Natural killer cell (primary cell): ENCODE measurements at regions of chr17 and their contacts with region 1.

Region 1: GRCh38 chr17:58006924-58007780 is at the start of gene SRSF1:
- DNase-seq: peak; percentile 97 to 100
- ATAC-seq: peak; percentile 84 to 94 (median 85)
- H3K4me3 ChIP-seq: peak within 1 kb of the TSS; percentile 82
- H3K4me3 Mint-ChIP-seq: peak within 1 kb of the TSS; percentile 99
- H3K27ac ChIP-seq: peak within 1 kb of the TSS; percentile 83
- H3K27ac Mint-ChIP-seq: peak within 1 kb of the TSS; percentile 99
- H3K4me1 ChIP-seq: peaks cover 16% of the 10 kb centered on the region
- H3K4me1 Mint-ChIP-seq: peaks cover 50 to 51% of the 10 kb centered on the region in 2 donors
- H3K27me3 ChIP-seq: no peaks in the 10 kb centered on the region
- H3K27me3 Mint-ChIP-seq: no peaks in the 10 kb centered on the region
- CTCF ChIP-seq: no peak
- total RNA-seq, gene SRSF1: 125 to 157 (median 137) TPM

Region 2: DNA sequence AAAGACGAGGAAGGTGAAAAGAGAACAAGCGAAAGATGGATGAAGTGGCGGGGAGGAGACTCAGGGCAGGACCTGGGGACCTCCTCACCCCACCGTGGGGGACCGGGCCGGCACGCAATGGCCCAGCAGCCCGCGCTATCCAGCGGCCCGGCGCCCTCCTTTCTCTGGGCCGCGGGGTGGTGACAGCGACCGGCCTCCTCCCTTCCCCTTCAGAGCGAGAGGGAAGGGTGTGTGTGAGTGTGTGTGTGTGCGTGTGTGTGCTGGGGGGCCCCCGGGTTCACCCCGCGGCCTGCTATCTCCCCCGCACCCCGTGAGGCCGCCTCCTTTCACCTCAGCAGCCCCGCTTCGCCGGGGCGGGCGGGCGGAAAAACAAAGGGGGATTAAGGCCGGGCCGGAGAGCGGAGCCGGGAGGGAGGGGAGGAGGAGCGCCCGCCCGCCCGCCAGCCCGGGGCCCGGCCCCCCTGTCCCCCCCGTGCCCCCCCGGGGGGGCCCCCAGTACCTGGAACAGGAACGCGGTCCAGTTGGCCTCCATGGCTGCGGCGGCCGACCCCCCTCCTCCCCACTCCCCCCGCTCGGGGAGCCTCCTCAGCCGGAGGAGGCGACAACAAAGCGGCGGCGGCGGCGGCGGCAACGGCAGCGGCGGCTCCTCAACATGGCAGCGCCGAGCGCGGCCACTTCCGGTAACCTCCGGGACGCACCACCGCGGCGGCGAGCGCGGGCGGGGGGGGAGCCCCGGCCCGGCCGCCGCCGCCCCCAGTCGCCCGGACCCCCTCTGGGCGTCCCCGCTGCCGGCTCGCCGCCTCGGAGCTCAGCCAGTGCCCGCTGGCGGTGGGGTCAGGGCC is 19.4 kb before region 1 on chr17 and contains the start of gene VEZF1:
- intact Hi-C with region 1: loop called (anchors 2 kb)
- DNase-seq: peak; percentile 78 to 84
- ATAC-seq: peak; percentile 61 to 79 (median 79)
- H3K4me3 ChIP-seq: peak within 1 kb of the TSS; percentile 91
- H3K4me3 Mint-ChIP-seq: peak within 1 kb of the TSS; percentile 93
- H3K27ac ChIP-seq: peak within 1 kb of the TSS; percentile 81
- H3K27ac Mint-ChIP-seq: peak within 1 kb of the TSS; percentile 87 to 95
- H3K4me1 ChIP-seq: peaks cover 26% of the 10 kb centered on the region
- H3K4me1 Mint-ChIP-seq: peaks cover 58 to 61% of the 10 kb centered on the region in 2 donors
- H3K27me3 ChIP-seq: no peaks in the 10 kb centered on the region
- H3K27me3 Mint-ChIP-seq: no peaks in the 10 kb centered on the region
- CTCF ChIP-seq: no peak
- total RNA-seq, gene VEZF1: 49.8 to 64.6 (median 63.4) TPM

Region 3: GRCh38 chr17:58112970-58113631 is 105.9 kb after region 1 on chr17:
- intact Hi-C with region 1: loop called (anchors 5 kb)
- DNase-seq: peak; percentile 72 to 90
- ATAC-seq: peak; percentile 83 to 99 (median 97)
- H3K4me3 ChIP-seq: no peak overlapping the region
- H3K4me3 Mint-ChIP-seq: no peak overlapping the region
- H3K27ac ChIP-seq: no peak overlapping the region
- H3K27ac Mint-ChIP-seq: no peak overlapping the region
- H3K4me1 ChIP-seq: no peaks in the 10 kb centered on the region
- H3K4me1 Mint-ChIP-seq: no peaks in the 10 kb centered on the region
- H3K27me3 ChIP-seq: no peaks in the 10 kb centered on the region
- H3K27me3 Mint-ChIP-seq: peaks cover 0 to 10% of the 10 kb centered on the region in 2 donors
- CTCF ChIP-seq: peak; percentile 94

Region 4: DNA sequence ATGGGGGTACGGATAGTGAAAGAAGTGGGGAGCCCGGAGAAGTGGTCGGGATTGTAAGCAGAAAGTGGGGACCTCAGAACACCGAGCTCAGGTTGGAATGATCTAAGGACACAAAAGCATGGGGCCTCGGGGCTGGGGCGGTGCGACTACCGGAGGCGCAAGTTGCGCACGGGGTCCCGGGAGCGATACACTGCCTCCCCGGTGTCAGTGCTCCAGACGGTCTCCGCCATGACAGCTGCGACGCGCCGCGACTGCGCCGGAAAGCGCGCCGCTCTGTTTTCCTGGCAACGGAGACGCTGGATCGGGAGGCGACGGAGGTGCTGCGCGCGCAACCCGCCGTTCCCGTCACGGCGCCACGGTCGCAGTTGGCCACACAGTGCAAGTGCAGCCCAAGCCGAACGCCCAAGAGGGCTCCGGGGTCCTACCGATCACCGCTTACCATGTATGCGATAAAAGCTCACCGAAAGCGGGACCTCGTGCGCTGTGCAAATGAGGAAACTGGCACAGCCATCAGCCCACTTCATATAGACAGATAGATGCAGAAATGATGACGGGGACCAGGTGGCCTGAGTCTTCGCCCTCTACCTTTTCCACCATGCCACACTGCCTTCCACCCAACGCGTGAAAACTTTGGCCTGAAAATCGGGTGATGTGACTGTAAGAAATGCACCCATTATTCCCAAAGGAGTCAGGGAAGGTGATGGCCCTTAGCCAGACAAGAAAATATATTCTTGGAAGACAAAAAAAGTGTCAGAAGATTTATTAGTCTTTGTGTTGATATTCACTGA is 212.0 kb after region 1 on chr17 and contains the start of gene MKS1:
- intact Hi-C with region 1: loop called (anchors 2 kb)
- DNase-seq: peak; percentile 92 to 97
- ATAC-seq: peak; percentile 95 to 98 (median 97)
- H3K4me3 ChIP-seq: peak within 1 kb of the TSS; percentile 81
- H3K4me3 Mint-ChIP-seq: peak within 1 kb of the TSS; percentile 96
- H3K27ac ChIP-seq: peak within 1 kb of the TSS; percentile 77
- H3K27ac Mint-ChIP-seq: peak within 1 kb of the TSS; percentile 94 to 95
- H3K4me1 ChIP-seq: peaks cover 14% of the 10 kb centered on the region
- H3K4me1 Mint-ChIP-seq: peaks cover 18 to 22% of the 10 kb centered on the region in 2 donors
- H3K27me3 ChIP-seq: no peaks in the 10 kb centered on the region
- H3K27me3 Mint-ChIP-seq: peaks cover 0 to 13% of the 10 kb centered on the region in 2 donors
- CTCF ChIP-seq: peak; percentile 63
- total RNA-seq, gene MKS1: 4.5 to 10.7 (median 8.5) TPM